ENCODE measurements at regions of chr9 and their contacts with region 1.

Region 1: DNA sequence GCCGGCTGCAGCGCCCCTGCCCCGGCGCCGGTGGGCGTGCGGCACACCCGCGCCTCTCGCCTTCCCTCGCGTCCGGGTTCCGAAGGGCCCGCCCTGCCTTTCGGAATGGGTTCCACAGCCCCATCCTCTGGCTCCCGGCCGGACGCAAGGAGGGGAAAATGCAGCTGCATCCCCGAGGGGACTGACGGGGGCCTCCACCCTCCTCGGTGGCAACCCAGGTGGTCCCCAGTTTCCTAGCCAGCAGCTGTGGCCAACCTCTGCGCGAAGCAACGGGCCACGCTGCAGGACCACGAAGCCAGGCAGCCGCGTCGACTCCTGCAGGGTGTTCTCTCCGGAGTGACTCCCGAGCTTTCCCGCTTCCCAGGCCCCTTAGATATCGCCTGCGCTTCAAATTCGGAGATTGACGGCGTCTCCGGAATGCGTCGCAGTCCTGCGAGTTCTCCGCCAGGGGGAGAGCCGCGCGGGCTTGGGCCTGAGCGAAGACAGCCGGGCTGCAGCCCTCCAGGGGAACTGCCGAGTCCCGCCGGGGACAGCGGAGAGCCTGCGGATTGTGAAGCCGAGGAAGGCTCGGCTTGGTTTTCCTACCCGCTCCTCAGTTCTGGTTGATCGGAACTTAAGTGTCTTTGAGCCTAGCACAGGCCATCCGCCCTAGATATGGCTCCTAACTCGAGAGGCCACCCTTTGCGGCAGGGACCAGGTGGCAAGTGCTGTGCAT is 582 bp upstream of the APBA1 start:
- DNase-seq: peak; percentile 55
- ATAC-seq: peak; percentile 98
- H3K4me3 ChIP-seq: peak overlapping the region; percentile 57 to 68 (median 59)
- H3K27ac ChIP-seq: no peak overlapping the region
- H3K4me1 ChIP-seq: no peaks in the 10 kb centered on the region
- H3K27me3 ChIP-seq: peaks cover 3 to 48% of the 10 kb centered on the region in 2 experiments
- CTCF ChIP-seq: peak; percentile 93
- EP300 ChIP-seq: no peak
- POLR2A ChIP-seq: no peak
- RAD21 ChIP-seq: peak; percentile 87

Region 2: GRCh38 chr9:69745716-69746437 is 73.1 kb after region 1 on chr9:
- CTCF ChIA-PET with region 1: no interaction called
- POLR2A ChIA-PET with region 1: interaction called, 3 read pairs
- in situ Hi-C with region 1: no loop called
- intact Hi-C with region 1: loop called (anchors 5 kb)
- DNase-seq: peak; percentile 14
- ATAC-seq: peak; percentile 20; the same call in 1 of the 3 replicates
- H3K4me3 ChIP-seq: no peak overlapping the region
- H3K27ac ChIP-seq: peak overlapping the region; percentile 66
- H3K4me1 ChIP-seq: peaks cover 60% of the 10 kb centered on the region
- H3K27me3 ChIP-seq: no peaks in the 10 kb centered on the region
- CTCF ChIP-seq: peak; percentile 40
- EP300 ChIP-seq: no peak
- POLR2A ChIP-seq: no peak
- RAD21 ChIP-seq: no peak

Region 3: DNA sequence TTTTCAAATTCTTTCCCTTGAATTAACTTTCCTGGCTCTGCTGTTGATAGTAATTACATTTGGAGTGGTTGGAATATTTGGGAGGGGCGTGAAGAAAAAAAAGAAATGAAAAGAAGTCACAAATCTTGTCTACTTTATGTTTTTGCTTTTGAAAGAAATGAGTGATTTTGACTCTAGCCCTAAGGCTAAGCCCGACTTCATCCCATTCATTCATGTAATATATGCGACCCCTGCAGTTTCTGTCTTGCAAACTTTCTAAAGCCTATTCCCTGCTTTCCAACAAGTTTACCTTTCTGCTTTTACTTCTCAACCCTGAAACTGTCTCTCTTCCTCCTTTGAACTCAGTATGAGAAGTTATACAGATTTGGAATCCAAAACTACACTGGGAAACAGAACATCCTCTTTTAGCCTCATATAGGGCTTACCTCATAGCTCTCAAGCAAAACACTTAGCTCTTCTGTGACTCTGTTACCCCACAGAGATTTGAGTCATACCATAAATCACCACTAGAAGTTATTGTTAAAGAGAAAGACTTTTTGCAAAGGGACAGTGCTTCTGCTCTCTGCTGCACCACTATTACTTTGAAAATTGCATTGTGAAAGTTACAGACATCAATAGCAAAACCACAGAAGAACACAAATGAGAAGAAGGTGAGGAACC is 149.5 kb after region 1 on chr9:
- CTCF ChIA-PET with region 1: no interaction called
- POLR2A ChIA-PET with region 1: no interaction called
- in situ Hi-C with region 1: no loop called
- intact Hi-C with region 1: loop called (anchors 10 kb)
- DNase-seq: no peak
- ATAC-seq: peak; percentile 65
- H3K4me3 ChIP-seq: no peak overlapping the region
- H3K27ac ChIP-seq: no peak overlapping the region
- H3K4me1 ChIP-seq: no peaks in the 10 kb centered on the region
- H3K27me3 ChIP-seq: peaks cover 0 to 18% of the 10 kb centered on the region in 2 experiments; a peak in 2 of 5 replicates
- CTCF ChIP-seq: peak; percentile 39
- EP300 ChIP-seq: no peak
- POLR2A ChIP-seq: no peak
- RAD21 ChIP-seq: no peak

Region 4: DNA sequence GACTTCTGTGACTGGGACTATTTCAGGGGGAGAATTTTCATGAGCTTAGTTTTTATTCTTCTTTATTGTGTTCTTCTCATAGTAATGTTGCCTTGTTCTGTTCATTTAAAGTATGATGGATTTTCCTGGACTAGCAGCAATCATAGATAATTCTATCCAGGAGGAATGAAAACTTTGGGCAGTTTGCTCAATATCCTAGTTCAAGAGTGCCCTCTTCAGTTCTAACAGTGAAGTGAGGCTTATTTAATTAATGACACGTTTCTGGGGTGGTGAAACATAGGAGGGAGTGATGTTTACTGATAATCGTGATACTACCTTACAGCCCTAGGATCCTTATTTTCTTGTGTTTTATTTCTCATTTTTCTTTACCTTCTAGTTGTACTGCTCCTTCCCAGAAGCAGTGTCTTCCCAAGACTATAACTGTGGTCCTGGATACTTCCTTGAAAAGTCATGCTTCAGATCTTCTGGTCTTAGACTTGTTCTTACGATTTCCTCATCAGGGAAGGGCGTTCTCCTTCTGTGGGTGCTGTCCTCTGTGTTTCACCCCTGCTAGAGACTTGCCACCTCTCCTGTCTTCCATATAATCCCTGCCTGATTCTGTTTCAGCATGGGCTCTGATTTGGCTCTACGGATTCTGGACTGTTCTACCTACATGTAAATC is 205.2 kb after region 1 on chr9:
- CTCF ChIA-PET with region 1: interaction called, 30 read pairs
- POLR2A ChIA-PET with region 1: no interaction called
- in situ Hi-C with region 1: loop called (anchors 10 kb)
- intact Hi-C with region 1: loop called (anchors 1 kb)
- DNase-seq: peak; percentile 43
- ATAC-seq: peak; percentile 75
- H3K4me3 ChIP-seq: no peak overlapping the region
- H3K27ac ChIP-seq: no peak overlapping the region
- H3K4me1 ChIP-seq: no peaks in the 10 kb centered on the region
- H3K27me3 ChIP-seq: peaks cover 0 to 4% of the 10 kb centered on the region in 2 experiments; a peak in 1 of 5 replicates
- CTCF ChIP-seq: peak; percentile 71
- EP300 ChIP-seq: no peak
- POLR2A ChIP-seq: no peak
- RAD21 ChIP-seq: peak; percentile 59; the same call in 1 of the 2 replicates

Region 5: GRCh38 chr9:69919461-69920061 is 246.8 kb after region 1 on chr9:
- CTCF ChIA-PET with region 1: interaction called, 5 read pairs
- POLR2A ChIA-PET with region 1: no interaction called
- in situ Hi-C with region 1: no loop called
- intact Hi-C with region 1: loop called (anchors 2 kb)
- DNase-seq: peak; percentile 50
- ATAC-seq: peak; percentile 89
- H3K4me3 ChIP-seq: no peak overlapping the region
- H3K27ac ChIP-seq: no peak overlapping the region
- H3K4me1 ChIP-seq: no peaks in the 10 kb centered on the region
- H3K27me3 ChIP-seq: no peaks in the 10 kb centered on the region; a peak in 1 of 5 replicates
- CTCF ChIP-seq: peak; percentile 67
- EP300 ChIP-seq: no peak
- POLR2A ChIP-seq: no peak
- RAD21 ChIP-seq: no peak

Measured in HepG2 (cell line).